PC-3 (cell line): ENCODE measurements at regions of chr15 and their contacts with region 1.

Region 1: DNA sequence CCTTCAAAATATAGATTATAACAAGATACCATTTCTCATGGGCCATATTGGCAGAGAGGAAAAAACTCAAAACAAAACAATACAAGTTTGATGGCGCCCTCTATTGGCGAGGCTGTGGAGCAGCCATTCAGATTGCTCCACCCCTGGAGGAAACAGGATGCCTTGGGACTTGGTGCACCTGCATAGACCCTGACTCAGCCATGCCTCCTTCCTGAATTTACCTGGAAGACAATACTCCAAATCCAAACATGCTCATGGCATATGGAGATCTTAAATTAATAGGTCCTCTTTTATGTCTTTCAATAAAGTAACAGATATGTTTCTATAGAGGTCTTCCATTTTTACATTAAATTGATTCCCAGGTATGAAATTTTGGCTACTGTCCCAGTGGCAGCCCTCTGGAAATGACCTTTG is 90.0 kb downstream of the APBA2 start:
- DNase-seq: peak; percentile 80
- ATAC-seq: peak; percentile 50
- H3K4me3 ChIP-seq: no peak overlapping the region
- H3K27ac ChIP-seq: no peak overlapping the region
- H3K4me1 ChIP-seq: peaks cover 14% of the 10 kb centered on the region
- H3K27me3 ChIP-seq: no peaks in the 10 kb centered on the region
- CTCF ChIP-seq: peak; percentile 96

Region 2: GRCh38 chr15:28786521-28786920 is 189.3 kb before region 1 on chr15:
- CTCF ChIA-PET with region 1: no interaction called
- POLR2A ChIA-PET with region 1: no interaction called
- intact Hi-C with region 1: loop called (anchors 5 kb)
- DNase-seq: no peak
- ATAC-seq: no peak
- H3K4me3 ChIP-seq: no peak overlapping the region
- H3K27ac ChIP-seq: no peak overlapping the region
- H3K4me1 ChIP-seq: no peaks in the 10 kb centered on the region
- H3K27me3 ChIP-seq: no peaks in the 10 kb centered on the region
- CTCF ChIP-seq: no peak

Region 3: GRCh38 chr15:28881170-28881569 is 94.6 kb before region 1 on chr15:
- CTCF ChIA-PET with region 1: no interaction called
- POLR2A ChIA-PET with region 1: no interaction called
- intact Hi-C with region 1: loop called (anchors 1 kb)
- DNase-seq: peak; percentile 26
- ATAC-seq: peak; percentile 55
- H3K4me3 ChIP-seq: no peak overlapping the region
- H3K27ac ChIP-seq: no peak overlapping the region
- H3K4me1 ChIP-seq: peaks cover 6% of the 10 kb centered on the region
- H3K27me3 ChIP-seq: no peaks in the 10 kb centered on the region
- CTCF ChIP-seq: 0 out of 2 replicates have a peak, but pooled peaks have one; percentile 31

Region 4: GRCh38 chr15:28913171-28913765 is 62.5 kb before region 1 on chr15:
- CTCF ChIA-PET with region 1: no interaction called
- POLR2A ChIA-PET with region 1: no interaction called
- intact Hi-C with region 1: loop called (anchors 1 kb)
- DNase-seq: no peak
- ATAC-seq: peak; percentile 80
- H3K4me3 ChIP-seq: no peak overlapping the region
- H3K27ac ChIP-seq: no peak overlapping the region
- H3K4me1 ChIP-seq: no peaks in the 10 kb centered on the region
- H3K27me3 ChIP-seq: no peaks in the 10 kb centered on the region
- CTCF ChIP-seq: no peak; the same call in 1 of the 2 replicates

Region 5: GRCh38 chr15:29045717-29046116 is 69.9 kb after region 1 on chr15:
- CTCF ChIA-PET with region 1: no interaction called
- POLR2A ChIA-PET with region 1: no interaction called
- intact Hi-C with region 1: no loop called
- DNase-seq: peak; percentile 35
- ATAC-seq: peak; percentile 68
- H3K4me3 ChIP-seq: no peak overlapping the region
- H3K27ac ChIP-seq: no peak overlapping the region
- H3K4me1 ChIP-seq: no peaks in the 10 kb centered on the region
- H3K27me3 ChIP-seq: no peaks in the 10 kb centered on the region
- CTCF ChIP-seq: no peak